HEK293 (cell line): ENCODE measurements at regions of chr2 and their contacts with region 1.

Region 1: GRCh38 chr2:112941753-112942658 is 31.0 kb downstream of the IL37 start:
- H3K4me3 ChIP-seq: no peak overlapping the region
- H3K27ac ChIP-seq: no peak overlapping the region
- H3K4me1 ChIP-seq: no peaks in the 10 kb centered on the region
- CTCF ChIP-seq: peak; percentile 71

Region 2: GRCh38 chr2:112737542-112738232 is 204.3 kb before region 1 on chr2:
- CTCF ChIA-PET with region 1: interaction called, 17 read pairs
- POLR2A ChIA-PET with region 1: no interaction called
- H3K4me3 ChIP-seq: no peak overlapping the region
- H3K27ac ChIP-seq: no peak overlapping the region
- H3K4me1 ChIP-seq: no peaks in the 10 kb centered on the region
- CTCF ChIP-seq: no peak

Region 3: DNA sequence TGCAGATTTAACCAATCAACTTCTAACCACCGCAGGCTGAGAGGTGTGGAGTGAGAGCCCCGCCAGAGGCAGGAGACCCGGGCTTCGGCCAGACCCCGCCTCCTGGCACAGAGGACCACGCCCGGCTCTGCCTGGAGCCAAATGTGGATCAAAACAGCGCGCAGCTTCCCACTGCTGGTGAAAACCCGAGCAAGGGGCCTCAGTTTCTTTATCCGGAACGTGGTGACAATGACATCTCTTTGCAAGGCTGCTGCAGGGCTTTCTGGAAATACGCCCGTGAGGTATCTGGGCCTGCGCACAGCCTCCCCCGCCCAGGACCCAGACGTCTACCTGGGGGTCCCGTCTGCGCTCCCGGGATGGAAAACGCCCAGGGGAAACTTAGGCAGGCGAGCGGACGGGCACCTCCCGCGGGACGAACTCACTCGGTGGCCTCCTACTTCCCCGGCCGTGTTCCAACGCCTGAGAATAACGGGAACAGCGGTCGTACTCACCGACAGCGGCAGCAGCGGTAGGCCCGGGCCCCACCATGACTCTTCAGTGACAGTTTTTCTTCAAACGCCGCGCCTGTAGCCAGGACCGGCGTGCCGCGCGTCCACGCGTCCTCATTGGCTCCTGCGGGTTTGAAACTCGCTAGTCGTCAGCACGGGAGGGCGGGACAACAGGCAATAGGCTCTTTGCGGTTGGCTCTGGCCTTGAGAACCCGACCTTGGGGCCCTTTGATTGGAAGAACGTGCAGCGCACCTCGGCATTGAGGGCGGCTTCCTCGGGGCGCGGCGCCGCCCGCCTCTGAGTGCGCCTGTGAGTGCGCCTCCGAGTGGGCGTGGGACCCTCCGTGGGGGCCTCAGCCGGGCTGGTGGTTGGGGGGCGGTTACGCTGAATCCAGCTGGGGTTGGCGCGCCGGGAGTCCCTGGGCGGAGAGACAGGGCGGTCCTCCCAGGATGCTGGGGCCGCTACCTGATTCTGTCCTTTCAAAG is 177.6 kb before region 1 on chr2 and contains the start of gene CKAP2L:
- CTCF ChIA-PET with region 1: interaction called, 29 read pairs
- POLR2A ChIA-PET with region 1: no interaction called
- H3K4me3 ChIP-seq: peak within 1 kb of the TSS; percentile 99
- H3K27ac ChIP-seq: peak within 1 kb of the TSS; percentile 72; the same call in 1 of the 2 replicates
- H3K4me1 ChIP-seq: 0 out of 2 replicates have a peak, but pooled peaks cover 7% of the 10 kb centered on the region
- CTCF ChIP-seq: no peak; the same call in 1 of the 2 replicates

Region 4: DNA sequence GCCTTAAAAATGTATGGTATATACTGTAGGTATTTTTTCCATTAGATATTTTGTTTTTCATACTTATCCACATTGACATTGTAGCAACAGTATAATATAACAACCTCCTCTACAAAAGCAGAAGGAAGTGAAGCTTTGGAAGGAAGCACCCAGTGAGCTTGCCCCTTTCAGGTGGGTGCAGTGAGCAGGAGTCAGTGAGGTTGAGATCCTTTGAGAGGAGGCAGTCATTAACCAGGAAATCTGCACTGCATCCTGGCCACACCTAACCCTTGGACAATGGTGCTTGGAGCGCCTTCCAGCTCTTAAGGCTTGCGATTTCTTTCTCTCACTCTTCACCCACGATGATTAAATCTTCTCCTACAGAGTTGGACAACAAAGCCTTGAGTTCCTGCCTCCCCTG is 17.2 kb before region 1 on chr2:
- CTCF ChIA-PET with region 1: interaction called, 43 read pairs
- POLR2A ChIA-PET with region 1: no interaction called
- H3K4me3 ChIP-seq: no peak overlapping the region
- H3K27ac ChIP-seq: no peak overlapping the region
- H3K4me1 ChIP-seq: no peaks in the 10 kb centered on the region
- CTCF ChIP-seq: no peak

Region 5: GRCh38 chr2:112967023-112967422 is 25.0 kb after region 1 on chr2:
- CTCF ChIA-PET with region 1: interaction called, 48 read pairs
- POLR2A ChIA-PET with region 1: no interaction called
- H3K4me3 ChIP-seq: no peak overlapping the region
- H3K27ac ChIP-seq: no peak overlapping the region
- H3K4me1 ChIP-seq: no peaks in the 10 kb centered on the region
- CTCF ChIP-seq: no peak

Region 6: DNA sequence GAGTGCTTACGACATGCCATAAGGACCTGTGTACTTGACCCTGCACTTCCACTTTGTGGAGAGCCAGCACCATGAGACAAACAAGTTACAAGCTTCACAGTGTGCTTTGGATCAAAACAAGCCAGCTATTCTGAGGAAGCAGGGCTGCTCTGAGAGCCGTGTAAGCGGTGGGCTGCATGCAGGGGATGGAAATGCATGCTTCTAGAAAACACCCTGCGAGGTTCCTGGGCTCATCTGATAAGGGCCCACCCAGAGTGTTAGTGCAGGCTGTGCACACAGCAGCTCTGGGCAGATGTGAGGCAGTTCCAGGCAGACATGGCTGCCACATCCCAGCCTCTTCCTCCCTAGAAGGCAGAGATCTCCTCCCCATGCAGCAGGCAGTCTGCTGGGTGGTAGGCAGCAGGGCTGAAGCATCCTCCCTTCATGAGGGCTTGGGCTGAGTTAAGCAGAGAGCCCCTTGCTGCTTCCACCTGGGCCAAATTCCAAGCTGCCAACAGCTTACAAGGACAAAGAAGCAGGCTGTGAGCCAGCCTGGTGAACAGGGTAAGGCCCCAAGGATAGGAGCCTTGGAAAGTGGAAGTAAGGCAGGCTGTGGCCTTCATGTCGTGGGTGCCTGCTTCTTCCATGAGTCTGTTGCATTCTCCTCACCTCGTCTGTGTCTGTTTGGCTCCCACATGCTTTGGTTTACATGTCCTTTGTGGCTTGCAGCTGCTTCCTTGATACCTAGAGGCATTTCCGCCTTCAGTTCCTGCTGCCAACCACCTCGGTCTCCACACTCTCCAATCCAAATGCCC is 239.4 kb after region 1 on chr2:
- CTCF ChIA-PET with region 1: no interaction called
- POLR2A ChIA-PET with region 1: no interaction called
- H3K4me3 ChIP-seq: no peak overlapping the region
- H3K27ac ChIP-seq: no peak overlapping the region
- H3K4me1 ChIP-seq: no peaks in the 10 kb centered on the region
- CTCF ChIP-seq: no peak